ENCODE measurements at regions of chr13 and their contacts with region 1.

Region 1: GRCh38 chr13:28819735-28820098 is 422 bp upstream of the MTUS2 start:
- DNase-seq: peak; percentile 28 to 95 (median 58)

Region 2: GRCh38 chr13:28636674-28637317 is 182.9 kb before region 1 on chr13:
- intact Hi-C with region 1: no loop called
- DNase-seq: peak in 6 of 10 donors; percentile 26 to 84 (median 36)

Region 3: GRCh38 chr13:29369060-29369743 is 549.5 kb after region 1 on chr13:
- intact Hi-C with region 1: loop called (anchors 2 kb)
- DNase-seq: peak in 1 of 10 donors; percentile 27

Measured in posterior cingulate gyrus (tissue), 11 donors.